Right ventricle myocardium superior (tissue), 1 donor: ENCODE measurements at regions of chr11 and their contacts with region 1.

Region 1: GRCh38 chr11:122439911-122440810 is 215.4 kb upstream of the UBASH3B start:
- DNase-seq: peak; percentile 65
- ATAC-seq: peak; percentile 85

Region 2: GRCh38 chr11:122137081-122137793 is 302.9 kb before region 1 on chr11:
- intact Hi-C with region 1: no loop called
- DNase-seq: no peak
- ATAC-seq: peak; percentile 87

Region 3: GRCh38 chr11:122309262-122309925 is 130.8 kb before region 1 on chr11:
- intact Hi-C with region 1: loop called (anchors 10 kb)
- DNase-seq: no peak
- ATAC-seq: peak; percentile 87

Region 4: DNA sequence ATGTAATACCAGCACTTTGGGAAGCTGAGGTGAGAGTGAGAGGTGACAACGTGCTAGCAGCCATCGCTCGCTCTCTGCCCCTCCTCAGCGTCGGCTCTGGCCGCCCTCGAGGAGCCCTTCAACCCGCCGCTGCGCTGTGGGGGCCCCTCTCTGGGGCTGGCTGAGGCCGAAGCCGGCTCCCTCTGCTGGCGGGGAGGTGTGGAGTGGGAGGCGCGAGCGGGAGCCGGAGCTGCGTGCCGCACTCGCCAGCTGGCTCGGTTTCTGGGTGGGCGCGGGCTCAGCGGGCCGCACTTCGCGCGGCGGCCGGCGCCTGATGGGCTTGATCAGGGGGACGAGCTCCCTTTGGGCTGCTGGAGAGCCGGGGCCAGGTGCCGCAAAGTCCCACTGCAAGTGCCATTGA is 116.4 kb after region 1 on chr11:
- intact Hi-C with region 1: no loop called
- DNase-seq: no peak
- ATAC-seq: no peak

Region 5: DNA sequence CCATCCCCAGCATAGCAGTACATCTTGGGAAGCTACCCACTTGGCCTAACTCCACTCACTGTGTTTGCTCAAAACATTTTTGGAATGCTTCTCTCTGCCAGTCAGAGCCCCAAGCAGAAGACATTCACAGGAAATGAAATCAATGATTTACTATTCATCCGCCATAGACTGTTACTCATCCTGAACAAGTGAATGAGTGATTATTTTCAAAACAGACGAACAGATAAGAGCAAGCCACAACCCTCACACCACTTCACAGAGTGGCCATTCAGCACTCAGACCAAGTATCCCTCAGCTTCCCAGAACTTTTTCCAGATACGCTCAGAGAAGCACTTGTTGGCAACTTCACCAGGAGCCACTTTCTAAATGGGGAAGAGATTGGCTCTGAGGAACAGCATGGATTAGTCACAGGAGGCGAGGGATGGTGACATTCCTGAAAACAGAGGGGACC is 202.3 kb after region 1 on chr11:
- intact Hi-C with region 1: no loop called
- DNase-seq: no peak
- ATAC-seq: peak; percentile 43